Left cardiac atrium (tissue), 4 donors: ENCODE measurements at regions of chr18 and their contacts with region 1.

Region 1: GRCh38 chr18:12657684-12658425 is at the start of gene SPIRE1:
- DNase-seq: peak; percentile 82
- ATAC-seq: peak; percentile 91 to 93
- total RNA-seq, gene SPIRE1: 31.5 to 46.4 TPM

Region 2: GRCh38 chr18:12520442-12520992 is 137.3 kb before region 1 on chr18:
- intact Hi-C with region 1: loop called (anchors 5 to 10 kb)
- DNase-seq: no peak
- ATAC-seq: peak; percentile 44 to 69

Region 3: GRCh38 chr18:12589448-12589847 is 68.4 kb before region 1 on chr18:
- intact Hi-C with region 1: no loop called
- DNase-seq: no peak
- ATAC-seq: no peak

Region 4: DNA sequence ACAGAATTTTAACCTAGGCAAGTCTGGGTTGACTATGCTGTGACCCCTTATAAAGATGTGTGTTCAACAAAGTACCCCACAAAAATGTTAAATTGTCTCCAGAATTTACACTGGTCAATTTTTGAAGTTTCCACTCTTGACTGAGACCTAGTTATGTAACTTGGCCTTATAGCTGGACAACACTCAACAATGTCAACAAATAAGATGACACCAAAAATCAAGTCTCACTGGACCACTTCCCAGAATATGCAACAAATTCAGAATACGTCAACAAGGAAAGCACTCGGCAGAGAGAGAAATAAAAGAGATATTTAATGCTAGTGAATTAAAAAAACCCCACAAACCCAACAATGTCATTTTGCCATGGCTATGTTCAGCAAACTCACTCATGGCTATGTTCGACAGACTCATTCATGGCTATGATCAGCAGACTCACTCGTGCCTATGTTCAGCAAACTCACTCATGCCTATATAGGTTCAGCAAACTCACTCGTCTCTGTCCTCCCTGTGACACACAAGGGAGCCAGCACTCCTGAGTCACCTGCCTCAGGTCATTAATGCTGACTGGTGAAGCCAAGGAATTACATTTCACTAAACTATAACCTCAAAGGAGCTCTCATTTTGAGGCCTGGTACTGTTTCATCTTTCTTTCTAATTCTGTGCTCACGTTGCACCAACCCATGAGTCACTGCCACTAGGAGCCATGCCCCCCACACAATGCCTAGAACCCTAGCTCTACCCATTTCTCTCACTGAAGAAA is 153.5 kb after region 1 on chr18:
- intact Hi-C with region 1: no loop called
- DNase-seq: no peak
- ATAC-seq: no peak

Region 5: GRCh38 chr18:12934454-12935071 is 276.7 kb after region 1 on chr18:
- intact Hi-C with region 1: no loop called
- DNase-seq: peak; percentile 88
- ATAC-seq: peak; percentile 94 to 96